ENCODE measurements at regions of chr1 and their contacts with region 1.

Region 1: DNA sequence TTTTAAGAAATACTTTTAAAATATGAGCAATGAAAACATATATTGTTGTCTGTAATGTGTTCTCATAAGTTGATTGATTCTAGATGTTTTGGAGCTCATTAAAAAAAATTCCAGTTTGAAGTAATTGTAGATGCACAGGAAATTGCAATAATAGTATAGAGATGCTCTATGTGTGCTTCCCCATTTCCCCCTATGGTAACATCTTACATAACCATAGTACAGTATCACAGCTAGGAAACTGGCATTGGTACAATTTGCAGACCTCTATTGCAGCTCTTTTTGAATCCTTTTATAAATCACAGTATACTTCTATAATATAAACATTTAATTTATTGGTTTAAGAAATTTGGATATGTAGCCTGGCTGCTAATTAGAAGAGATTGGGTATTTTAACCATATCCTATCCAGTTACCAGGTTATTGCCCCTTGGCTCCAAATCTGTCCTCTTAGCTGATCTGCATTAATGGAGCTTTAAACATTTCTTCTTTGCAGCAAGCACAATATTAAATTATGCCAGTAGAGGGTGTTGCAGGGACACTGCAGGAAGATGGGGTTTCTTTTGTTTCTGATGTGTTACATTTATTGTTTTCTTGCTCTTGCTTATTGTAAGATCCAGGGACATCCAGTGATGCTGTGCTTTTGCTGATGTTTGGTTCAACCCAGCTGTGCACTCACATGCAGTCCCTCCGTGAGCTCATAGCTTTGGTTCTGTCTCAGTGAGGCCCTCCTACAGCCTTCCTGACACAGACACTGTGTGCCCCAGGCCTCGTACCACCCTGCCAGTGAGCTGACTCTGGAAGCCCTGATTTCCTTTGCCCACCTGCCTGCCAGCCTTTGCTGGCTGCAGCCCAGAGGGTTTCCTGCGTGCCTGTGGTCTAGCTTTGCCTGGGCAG is 103.3 kb downstream of the RABGAP1L start:
- DNase-seq: peak; percentile 46
- ATAC-seq: peak; percentile 47
- H3K4me3 ChIP-seq: no peak overlapping the region
- H3K27ac ChIP-seq: no peak overlapping the region
- H3K4me1 ChIP-seq: peaks cover 23% of the 10 kb centered on the region
- H3K27me3 ChIP-seq: no peaks in the 10 kb centered on the region
- CTCF ChIP-seq: peak; percentile 81
- EP300 ChIP-seq: no peak
- POLR2A ChIP-seq: no peak
- RAD21 ChIP-seq: peak; percentile 66

Region 2: GRCh38 chr1:174497478-174497877 is 234.9 kb after region 1 on chr1:
- CTCF ChIA-PET with region 1: no interaction called
- POLR2A ChIA-PET with region 1: no interaction called
- in situ Hi-C with region 1: no loop called
- intact Hi-C with region 1: loop called (anchors 10 kb)
- DNase-seq: no peak
- ATAC-seq: no peak
- H3K4me3 ChIP-seq: no peak overlapping the region
- H3K27ac ChIP-seq: no peak overlapping the region
- H3K4me1 ChIP-seq: no peaks in the 10 kb centered on the region
- H3K27me3 ChIP-seq: no peaks in the 10 kb centered on the region; a peak in 1 of 5 replicates
- CTCF ChIP-seq: no peak
- EP300 ChIP-seq: no peak
- POLR2A ChIP-seq: no peak
- RAD21 ChIP-seq: no peak

Region 3: GRCh38 chr1:174659823-174660515 is 397.4 kb after region 1 on chr1:
- CTCF ChIA-PET with region 1: no interaction called
- POLR2A ChIA-PET with region 1: no interaction called
- in situ Hi-C with region 1: no loop called
- intact Hi-C with region 1: loop called (anchors 10 kb)
- DNase-seq: peak; percentile 4
- ATAC-seq: no peak
- H3K4me3 ChIP-seq: no peak overlapping the region
- H3K27ac ChIP-seq: no peak overlapping the region
- H3K4me1 ChIP-seq: peaks cover 11% of the 10 kb centered on the region
- H3K27me3 ChIP-seq: no peaks in the 10 kb centered on the region
- CTCF ChIP-seq: no peak
- EP300 ChIP-seq: no peak
- POLR2A ChIP-seq: no peak
- RAD21 ChIP-seq: no peak

Region 4: DNA sequence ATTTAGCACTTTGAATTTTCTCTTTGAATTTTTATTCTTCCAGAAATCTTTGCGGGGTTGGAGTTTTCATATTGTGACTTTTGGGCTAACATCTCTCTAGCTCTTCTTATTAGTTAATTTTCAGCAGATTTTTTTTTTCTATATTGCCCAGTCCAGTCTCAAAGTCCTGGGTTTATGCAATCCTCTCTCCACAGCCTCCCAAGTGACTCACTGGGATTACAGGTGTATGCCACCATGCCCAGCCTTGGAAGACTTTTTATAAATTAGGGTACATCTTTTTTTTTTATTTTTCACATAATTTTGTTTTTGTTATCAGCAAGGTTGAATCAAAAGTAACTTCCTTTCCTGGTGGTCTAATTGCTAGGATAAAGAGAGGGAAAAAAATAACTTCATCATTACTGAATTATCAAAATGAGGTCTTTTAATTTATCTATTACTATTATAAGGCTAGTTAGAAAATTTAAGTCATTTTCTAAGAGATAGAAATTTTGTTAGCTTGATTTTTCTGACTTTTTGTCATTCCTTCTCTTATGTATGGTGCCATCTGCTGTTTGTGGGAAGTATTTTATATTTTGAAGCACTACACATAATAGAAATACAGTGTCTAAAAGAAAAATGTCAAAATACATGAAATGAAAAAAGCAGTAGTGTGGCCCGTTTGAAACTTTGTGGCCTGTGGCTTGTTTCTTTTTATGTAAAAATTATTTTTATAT is 463.7 kb after region 1 on chr1:
- CTCF ChIA-PET with region 1: interaction called, 16 read pairs
- POLR2A ChIA-PET with region 1: interaction called, 3 read pairs
- in situ Hi-C with region 1: no loop called
- intact Hi-C with region 1: loop called (anchors 1 kb)
- DNase-seq: peak; percentile 39
- ATAC-seq: peak; percentile 51; the same call in 2 of the 3 replicates
- H3K4me3 ChIP-seq: no peak overlapping the region
- H3K27ac ChIP-seq: no peak overlapping the region
- H3K4me1 ChIP-seq: peaks cover 25% of the 10 kb centered on the region
- H3K27me3 ChIP-seq: no peaks in the 10 kb centered on the region
- CTCF ChIP-seq: peak; percentile 43
- EP300 ChIP-seq: no peak
- POLR2A ChIP-seq: no peak
- RAD21 ChIP-seq: no peak; the same call in 1 of the 2 replicates

Region 5: GRCh38 chr1:174743654-174744561 is 481.3 kb after region 1 on chr1:
- CTCF ChIA-PET with region 1: interaction called, 24 read pairs
- POLR2A ChIA-PET with region 1: no interaction called
- in situ Hi-C with region 1: loop called (anchors 5 kb)
- intact Hi-C with region 1: loop called (anchors 1 kb)
- DNase-seq: peak; percentile 35
- ATAC-seq: no peak
- H3K4me3 ChIP-seq: no peak overlapping the region
- H3K27ac ChIP-seq: no peak overlapping the region
- H3K4me1 ChIP-seq: peaks cover 6% of the 10 kb centered on the region; the same call in 1 of the 2 replicates
- H3K27me3 ChIP-seq: no peaks in the 10 kb centered on the region
- CTCF ChIP-seq: peak; percentile 52
- EP300 ChIP-seq: no peak
- POLR2A ChIP-seq: no peak
- RAD21 ChIP-seq: 0 out of 2 replicates have a peak, but pooled peaks have one; percentile 11